CD4-positive, alpha-beta memory T cell (primary cell): ENCODE measurements at regions of chr17 and their contacts with region 1.

Region 1: GRCh38 chr17:60971515-60972369 is 294.1 kb downstream of the BCAS3 start:
- DNase-seq: peak in 4 of 5 donors; percentile 15 to 29 (median 22)
- H3K4me3 ChIP-seq: no peak overlapping the region
- H3K4me3 Mint-ChIP-seq: no peak overlapping the region
- H3K27ac ChIP-seq: no peak overlapping the region
- H3K27ac Mint-ChIP-seq: no peak overlapping the region
- H3K4me1 ChIP-seq: no peaks in the 10 kb centered on the region
- H3K4me1 Mint-ChIP-seq: peaks cover 0 to 3% (median 0%) of the 10 kb centered on the region in 4 donors
- H3K27me3 ChIP-seq: no peaks in the 10 kb centered on the region
- H3K27me3 Mint-ChIP-seq: no peaks in the 10 kb centered on the region

Region 2: DNA sequence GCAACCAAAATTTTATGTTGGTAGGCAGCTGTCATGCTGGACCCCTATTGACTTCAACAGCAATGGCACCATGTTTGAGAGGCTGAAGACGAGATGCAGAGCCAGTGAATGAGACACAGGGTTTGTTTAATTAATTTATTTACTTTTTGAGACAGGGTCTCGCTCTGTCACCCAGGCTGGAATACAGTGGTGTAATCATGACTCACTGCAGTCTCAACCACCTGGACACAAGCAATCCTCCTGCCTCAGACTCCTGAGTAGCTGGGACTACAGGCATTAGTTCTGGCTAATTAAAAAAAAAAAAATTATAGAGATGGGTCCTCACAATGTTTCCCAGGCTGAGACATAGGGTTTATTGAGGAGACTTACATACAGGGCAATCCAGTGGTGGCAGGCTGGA is 408.0 kb before region 1 on chr17:
- CTCF ChIA-PET with region 1: no interaction called
- POLR2A ChIA-PET with region 1: no interaction called
- intact Hi-C with region 1: no loop called
- DNase-seq: no peak
- H3K4me3 ChIP-seq: no peak overlapping the region
- H3K4me3 Mint-ChIP-seq: no peak overlapping the region
- H3K27ac ChIP-seq: no peak overlapping the region
- H3K27ac Mint-ChIP-seq: no peak overlapping the region
- H3K4me1 ChIP-seq: no peaks in the 10 kb centered on the region
- H3K4me1 Mint-ChIP-seq: no peaks in the 10 kb centered on the region
- H3K27me3 ChIP-seq: no peaks in the 10 kb centered on the region
- H3K27me3 Mint-ChIP-seq: peaks cover 0 to 1% of the 10 kb centered on the region in 2 donors

Region 3: GRCh38 chr17:60741031-60741430 is 230.7 kb before region 1 on chr17:
- CTCF ChIA-PET with region 1: no interaction called
- POLR2A ChIA-PET with region 1: no interaction called
- intact Hi-C with region 1: no loop called
- DNase-seq: no peak
- H3K4me3 ChIP-seq: no peak overlapping the region
- H3K4me3 Mint-ChIP-seq: no peak overlapping the region
- H3K27ac ChIP-seq: no peak overlapping the region
- H3K27ac Mint-ChIP-seq: peak overlapping the region in 1 of 7 donors; percentile 66
- H3K4me1 ChIP-seq: no peaks in the 10 kb centered on the region
- H3K4me1 Mint-ChIP-seq: peaks cover 0 to 4% (median 2%) of the 10 kb centered on the region in 4 donors
- H3K27me3 ChIP-seq: no peaks in the 10 kb centered on the region
- H3K27me3 Mint-ChIP-seq: no peaks in the 10 kb centered on the region

Region 4: DNA sequence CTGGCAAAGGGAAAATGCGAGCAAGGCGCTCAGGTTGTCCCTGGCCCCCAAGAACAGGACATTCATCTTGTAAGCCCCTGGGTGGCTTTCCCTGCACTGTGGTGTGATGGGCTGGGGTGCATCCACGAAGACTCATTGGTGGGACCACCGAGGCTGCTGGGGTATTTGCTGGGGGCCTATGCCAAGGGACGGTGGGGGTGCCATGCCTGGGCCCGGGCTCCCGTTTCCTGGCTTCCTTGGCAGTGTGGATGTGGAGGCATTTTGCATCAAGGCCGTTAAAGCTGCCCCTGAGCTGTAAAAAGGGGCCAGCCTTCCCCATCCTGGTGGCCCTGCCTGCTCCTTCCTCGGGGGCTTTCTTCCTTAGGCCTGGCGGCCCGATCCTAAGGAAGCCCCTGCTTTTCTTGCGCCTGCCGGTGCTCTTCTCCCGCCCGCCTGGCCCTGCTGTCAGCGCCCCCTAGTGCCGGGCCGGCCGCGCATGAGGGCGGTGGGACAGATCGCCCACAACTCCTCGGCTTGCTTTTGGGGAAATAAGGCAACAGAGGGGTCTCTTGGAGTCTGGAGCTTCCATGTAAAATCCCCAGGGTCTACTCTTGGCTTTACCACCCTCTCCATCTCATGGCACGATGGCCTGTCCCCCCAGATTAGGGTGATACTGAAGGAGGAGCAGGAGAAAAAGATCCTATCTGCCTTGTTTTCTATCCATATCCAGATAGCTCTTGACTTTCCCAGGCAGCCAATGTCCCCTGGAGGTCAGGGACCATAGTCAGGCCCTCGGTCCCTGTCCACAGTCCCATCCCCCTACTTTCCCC is 418.1 kb after region 1 on chr17:
- CTCF ChIA-PET with region 1: interaction called, 13 read pairs
- POLR2A ChIA-PET with region 1: no interaction called
- intact Hi-C with region 1: no loop called
- DNase-seq: no peak
- H3K4me3 ChIP-seq: no peak overlapping the region
- H3K4me3 Mint-ChIP-seq: no peak overlapping the region
- H3K27ac ChIP-seq: no peak overlapping the region
- H3K27ac Mint-ChIP-seq: peak overlapping the region in 1 of 7 donors; percentile 2
- H3K4me1 ChIP-seq: peaks cover 3% of the 10 kb centered on the region
- H3K4me1 Mint-ChIP-seq: peaks cover 0 to 5% (median 0%) of the 10 kb centered on the region in 4 donors
- H3K27me3 ChIP-seq: no peaks in the 10 kb centered on the region
- H3K27me3 Mint-ChIP-seq: peaks cover 2 to 9% of the 10 kb centered on the region in 2 donors

Region 5: DNA sequence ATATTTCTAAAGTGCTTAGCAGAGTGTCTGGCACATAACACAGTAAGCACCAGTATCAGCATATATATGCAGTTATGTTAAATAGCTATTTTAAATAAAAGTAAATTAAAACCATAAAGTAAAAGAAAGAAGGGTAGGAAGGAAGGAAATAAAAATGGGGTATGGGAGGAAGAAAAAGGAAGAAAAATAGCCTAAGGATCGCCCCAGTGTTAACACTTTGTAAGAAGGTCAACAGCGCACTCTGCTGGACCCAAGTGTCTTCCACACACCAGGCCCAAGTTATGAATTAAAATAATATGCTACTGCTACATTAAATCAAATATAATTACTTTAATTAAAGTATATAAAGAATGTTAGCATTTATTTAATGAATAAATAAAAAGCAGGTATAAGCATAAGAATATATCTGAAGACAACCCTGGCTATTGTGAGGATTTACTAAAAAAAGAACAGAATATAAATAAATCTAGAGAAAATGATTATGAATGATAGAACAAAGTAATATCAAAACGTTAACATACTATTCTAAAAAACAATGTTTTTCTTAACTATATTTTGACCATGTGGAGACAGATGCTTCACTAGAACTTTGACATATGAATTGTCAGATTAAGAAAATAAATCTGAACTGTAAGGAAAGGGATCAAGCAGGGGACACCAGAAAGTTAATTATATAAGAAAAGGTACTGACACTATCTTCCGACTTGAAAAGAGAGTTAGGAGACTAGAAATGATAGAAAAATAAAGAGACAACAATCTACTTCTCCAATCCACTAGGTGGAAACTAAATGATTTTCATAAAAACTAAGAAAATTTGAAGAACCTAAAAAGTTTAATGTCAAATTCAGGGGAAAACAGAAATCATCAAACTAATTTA is 865.7 kb after region 1 on chr17:
- CTCF ChIA-PET with region 1: no interaction called
- POLR2A ChIA-PET with region 1: no interaction called
- intact Hi-C with region 1: loop called (anchors 2 kb)
- DNase-seq: peak; percentile 28 to 47 (median 37)
- H3K4me3 ChIP-seq: no peak overlapping the region
- H3K4me3 Mint-ChIP-seq: no peak overlapping the region
- H3K27ac ChIP-seq: no peak overlapping the region
- H3K27ac Mint-ChIP-seq: no peak overlapping the region
- H3K4me1 ChIP-seq: no peaks in the 10 kb centered on the region
- H3K4me1 Mint-ChIP-seq: no peaks in the 10 kb centered on the region
- H3K27me3 ChIP-seq: no peaks in the 10 kb centered on the region
- H3K27me3 Mint-ChIP-seq: no peaks in the 10 kb centered on the region